Activated B cell treated with CpG ODN at 0.5 μM for 24 hours (primary cell): ENCODE measurements at regions of chr7 and their contacts with region 1.

Region 1: DNA sequence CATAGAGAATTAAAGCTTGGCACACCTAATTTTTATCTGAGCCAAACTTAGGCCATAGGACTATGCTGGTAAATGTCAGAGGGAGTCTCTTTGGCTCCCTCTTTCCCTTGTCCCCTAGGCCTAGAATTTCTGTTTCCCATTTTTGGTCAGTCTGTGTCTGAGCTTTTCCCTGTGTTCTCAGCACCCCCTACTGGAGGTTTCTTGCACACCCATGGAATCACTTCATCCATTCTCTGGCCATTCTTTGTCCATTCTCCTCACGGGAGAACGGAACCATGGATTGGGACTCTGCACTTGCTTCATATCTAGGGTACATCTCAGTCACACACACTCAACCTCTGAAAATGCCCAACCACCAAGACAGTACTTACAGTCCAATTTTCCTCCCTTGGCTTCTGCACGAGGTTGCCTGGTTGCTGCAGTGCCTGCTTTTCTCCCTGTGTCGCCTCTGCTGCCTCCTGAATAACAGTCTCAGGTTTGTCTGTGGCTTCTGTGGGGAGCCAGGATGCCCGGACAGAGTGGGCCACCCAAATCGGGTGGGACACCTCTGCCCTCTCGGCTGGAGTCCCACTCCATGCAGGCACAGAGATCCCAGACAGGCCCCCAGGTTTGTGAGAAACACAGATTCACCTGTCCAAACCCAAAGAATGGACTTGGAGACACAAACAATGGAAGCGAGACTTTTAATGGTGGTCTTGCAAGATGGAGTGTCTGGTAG is 35.1 kb upstream of the DNAH11 start:
- DNase-seq: no peak
- ATAC-seq: no peak
- H3K4me3 Mint-ChIP-seq: no peak overlapping the region
- H3K27ac Mint-ChIP-seq: no peak overlapping the region
- H3K4me1 Mint-ChIP-seq: no peaks in the 10 kb centered on the region
- H3K27me3 Mint-ChIP-seq: no peaks in the 10 kb centered on the region
- CTCF ChIP-seq: no peak

Region 2: DNA sequence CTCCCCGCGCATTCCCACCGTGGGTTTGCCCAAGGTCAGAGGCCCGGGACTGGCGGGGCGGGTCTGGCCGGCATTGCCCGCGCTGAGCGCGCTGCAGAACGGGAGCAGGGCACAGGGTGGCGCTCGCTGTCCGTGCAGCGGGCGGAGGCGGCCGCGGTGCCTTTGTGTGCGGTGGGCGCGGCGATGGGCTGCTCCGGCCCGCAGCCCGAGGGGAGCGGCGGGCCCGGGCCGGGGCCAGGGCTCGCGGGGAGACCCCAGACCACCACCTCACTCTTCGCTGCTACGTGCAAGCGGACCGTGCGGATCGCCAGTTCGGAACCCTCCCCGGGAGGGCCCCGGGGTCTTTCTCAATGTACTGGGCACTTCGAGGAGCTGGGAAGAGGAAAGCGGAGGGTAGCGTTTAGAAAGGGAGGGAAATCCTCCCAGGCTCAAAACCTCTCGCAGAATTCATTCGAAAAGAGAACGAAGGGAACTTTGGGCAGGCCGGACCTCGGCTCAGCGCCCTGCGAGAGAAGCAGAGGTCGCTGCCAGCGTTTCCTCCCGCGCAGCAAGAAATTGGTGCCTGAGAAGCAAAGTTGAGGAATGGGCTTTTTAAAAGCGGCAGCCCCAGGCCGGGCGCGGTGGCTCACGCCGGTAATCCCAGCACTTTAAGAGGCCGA is 729.6 kb before region 1 on chr7:
- CTCF ChIA-PET with region 1: no interaction called
- POLR2A ChIA-PET with region 1: no interaction called
- intact Hi-C with region 1: loop called (anchors 10 kb)
- DNase-seq: no peak
- ATAC-seq: no peak
- H3K4me3 Mint-ChIP-seq: no peak overlapping the region
- H3K27ac Mint-ChIP-seq: no peak overlapping the region
- H3K4me1 Mint-ChIP-seq: peaks cover 16% of the 10 kb centered on the region
- H3K27me3 Mint-ChIP-seq: peaks cover 61% of the 10 kb centered on the region
- CTCF ChIP-seq: no peak

Region 3: GRCh38 chr7:21261627-21262594 is 245.9 kb before region 1 on chr7:
- CTCF ChIA-PET with region 1: interaction called, 30 read pairs
- POLR2A ChIA-PET with region 1: no interaction called
- intact Hi-C with region 1: loop called (anchors 1 kb)
- DNase-seq: peak; percentile 18
- ATAC-seq: peak; percentile 96
- H3K4me3 Mint-ChIP-seq: no peak overlapping the region
- H3K27ac Mint-ChIP-seq: peak overlapping the region; percentile 6
- H3K4me1 Mint-ChIP-seq: peaks cover 14% of the 10 kb centered on the region
- H3K27me3 Mint-ChIP-seq: no peaks in the 10 kb centered on the region
- CTCF ChIP-seq: no peak

Region 4: GRCh38 chr7:21480693-21481403 is 26.9 kb before region 1 on chr7:
- CTCF ChIA-PET with region 1: no interaction called
- POLR2A ChIA-PET with region 1: no interaction called
- intact Hi-C with region 1: no loop called
- DNase-seq: no peak
- ATAC-seq: no peak
- H3K4me3 Mint-ChIP-seq: no peak overlapping the region
- H3K27ac Mint-ChIP-seq: no peak overlapping the region
- H3K4me1 Mint-ChIP-seq: peaks cover 14% of the 10 kb centered on the region
- H3K27me3 Mint-ChIP-seq: no peaks in the 10 kb centered on the region
- CTCF ChIP-seq: no peak

Region 5: GRCh38 chr7:21526007-21526406 is 18.2 kb after region 1 on chr7:
- CTCF ChIA-PET with region 1: no interaction called
- POLR2A ChIA-PET with region 1: no interaction called
- intact Hi-C with region 1: no loop called
- DNase-seq: no peak
- ATAC-seq: no peak
- H3K4me3 Mint-ChIP-seq: no peak overlapping the region
- H3K27ac Mint-ChIP-seq: no peak overlapping the region
- H3K4me1 Mint-ChIP-seq: no peaks in the 10 kb centered on the region
- H3K27me3 Mint-ChIP-seq: no peaks in the 10 kb centered on the region
- CTCF ChIP-seq: no peak

Region 6: DNA sequence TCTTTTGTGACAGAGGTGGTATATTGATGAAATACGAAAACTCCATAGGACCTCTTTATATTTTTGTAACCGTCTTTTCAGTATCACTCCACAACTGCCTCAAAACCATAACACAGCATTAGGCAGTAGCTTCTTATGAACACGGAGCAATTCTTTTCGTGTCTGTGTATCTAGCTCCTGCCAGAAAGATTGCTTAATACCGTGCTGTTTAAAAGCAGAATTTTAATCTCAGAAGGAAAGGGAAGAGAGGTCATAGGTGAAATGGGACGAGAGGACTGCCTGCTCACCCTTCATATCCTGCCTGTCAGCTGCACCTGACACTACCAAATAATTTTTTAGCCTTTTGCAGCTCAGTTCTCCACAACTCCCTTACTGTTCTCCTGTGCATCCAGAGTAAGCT is 235.7 kb after region 1 on chr7:
- CTCF ChIA-PET with region 1: no interaction called
- POLR2A ChIA-PET with region 1: interaction called, 12 read pairs
- intact Hi-C with region 1: no loop called
- DNase-seq: no peak
- ATAC-seq: no peak
- H3K4me3 Mint-ChIP-seq: no peak overlapping the region
- H3K27ac Mint-ChIP-seq: no peak overlapping the region
- H3K4me1 Mint-ChIP-seq: no peaks in the 10 kb centered on the region
- H3K27me3 Mint-ChIP-seq: peaks cover 2% of the 10 kb centered on the region
- CTCF ChIP-seq: no peak